ENCODE measurements at regions of chr4 and their contacts with region 1.

Region 1: GRCh38 chr4:17447675-17448298 is 64.1 kb downstream of the QDPR start:
- DNase-seq: peak; percentile 74
- H3K4me3 Mint-ChIP-seq: no peak overlapping the region
- H3K27ac Mint-ChIP-seq: no peak overlapping the region
- H3K4me1 Mint-ChIP-seq: no peaks in the 10 kb centered on the region
- H3K27me3 Mint-ChIP-seq: peaks cover 7% of the 10 kb centered on the region

Region 2: DNA sequence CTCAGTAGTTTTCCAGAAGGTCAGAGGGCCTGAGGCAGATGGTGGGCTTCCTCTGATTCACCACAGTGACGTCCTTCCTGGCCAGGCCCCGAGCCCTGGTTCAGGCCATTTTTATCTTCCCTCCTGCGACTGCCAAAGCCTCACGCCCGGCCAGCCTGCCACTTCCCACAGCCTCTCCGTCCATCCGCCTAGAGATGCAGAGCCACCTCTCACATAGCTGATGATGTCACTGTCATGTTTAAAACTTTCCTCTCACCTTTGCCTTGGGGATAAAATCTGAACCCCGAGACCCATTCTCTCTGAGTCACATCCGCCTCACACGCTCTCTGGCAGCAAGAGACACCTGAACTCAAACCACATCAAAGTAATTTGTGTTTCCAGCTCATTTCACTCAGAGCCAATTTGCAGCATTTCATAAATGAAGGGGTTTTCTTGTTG is 111.2 kb before region 1 on chr4:
- CTCF ChIA-PET with region 1: interaction called, 10 read pairs
- DNase-seq: peak; percentile 83
- H3K4me3 Mint-ChIP-seq: no peak overlapping the region
- H3K27ac Mint-ChIP-seq: peak overlapping the region; percentile 64
- H3K4me1 Mint-ChIP-seq: peaks cover 31% of the 10 kb centered on the region
- H3K27me3 Mint-ChIP-seq: peaks cover 20% of the 10 kb centered on the region

Region 3: GRCh38 chr4:17470650-17471025 is 22.9 kb after region 1 on chr4:
- CTCF ChIA-PET with region 1: interaction called, 12 read pairs
- DNase-seq: no peak
- H3K4me3 Mint-ChIP-seq: no peak overlapping the region
- H3K27ac Mint-ChIP-seq: no peak overlapping the region
- H3K4me1 Mint-ChIP-seq: no peaks in the 10 kb centered on the region
- H3K27me3 Mint-ChIP-seq: no peaks in the 10 kb centered on the region

Region 4: DNA sequence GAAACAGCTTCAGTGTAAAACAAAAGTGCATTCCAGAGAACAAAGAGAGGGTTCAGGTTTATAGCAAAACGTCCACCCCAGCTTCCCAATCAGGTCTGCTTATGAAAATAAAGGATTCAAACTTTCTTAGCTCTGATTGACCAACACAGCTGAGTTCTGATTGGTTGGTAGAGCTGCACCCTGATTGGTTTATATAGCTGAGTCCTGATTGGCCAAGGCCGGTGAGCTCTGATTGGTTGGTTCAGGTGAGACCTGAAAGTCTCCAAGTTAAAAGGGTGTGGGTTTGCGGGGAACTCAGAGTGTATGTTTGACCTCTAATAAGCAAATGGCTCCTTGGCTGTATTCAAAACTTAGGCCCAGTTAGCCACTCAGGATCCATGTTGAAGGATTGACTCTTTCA is 88.1 kb after region 1 on chr4:
- CTCF ChIA-PET with region 1: no interaction called
- DNase-seq: no peak
- H3K4me3 Mint-ChIP-seq: no peak overlapping the region
- H3K27ac Mint-ChIP-seq: no peak overlapping the region
- H3K4me1 Mint-ChIP-seq: peaks cover 2% of the 10 kb centered on the region
- H3K27me3 Mint-ChIP-seq: peaks cover 31% of the 10 kb centered on the region